ENCODE measurements at regions of chr11 and their contacts with region 1.

Region 1: DNA sequence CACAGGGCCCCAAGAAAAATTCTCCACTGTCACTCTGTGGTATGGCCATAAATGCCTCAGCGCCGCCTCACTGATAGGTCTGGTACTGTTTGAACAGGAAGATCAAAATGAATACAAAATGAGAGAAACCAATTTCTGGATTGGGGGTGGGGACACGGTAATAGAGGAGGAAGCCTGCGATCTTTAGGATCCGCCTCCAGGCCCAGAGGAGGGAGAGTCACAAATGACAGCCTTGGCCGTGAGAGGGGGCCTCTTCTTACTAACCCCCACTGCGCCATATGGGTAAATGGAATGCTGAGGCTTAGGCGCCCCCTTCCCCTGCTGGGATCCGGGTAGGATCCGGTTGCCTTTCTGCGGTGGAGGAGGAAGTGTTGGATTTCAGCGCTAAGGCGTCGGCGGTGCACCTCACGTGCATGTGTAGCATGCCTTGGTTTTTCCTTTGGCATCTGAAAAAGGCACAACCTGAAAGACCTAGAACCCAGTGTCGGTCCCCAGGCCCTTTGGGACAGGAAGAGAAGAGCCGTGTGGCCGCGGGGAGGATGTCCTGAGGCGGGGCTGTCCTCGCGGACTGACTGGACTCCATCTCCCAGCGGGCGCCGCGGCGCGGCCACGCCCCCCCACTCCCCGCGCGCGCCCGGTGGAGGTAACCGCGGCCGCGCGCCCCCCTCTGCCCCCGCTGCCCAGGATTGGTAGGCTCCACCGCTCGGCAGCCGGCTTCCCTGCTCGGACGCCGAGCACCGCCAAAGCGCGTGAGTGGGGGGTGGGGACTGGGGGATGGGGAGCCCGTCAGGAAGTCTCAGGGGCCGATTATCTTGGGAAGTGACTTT is 718 bp upstream of the MADD start:
- DNase-seq: peak; percentile 73
- H3K4me3 Mint-ChIP-seq: peak overlapping the region; percentile 81
- H3K27ac Mint-ChIP-seq: peak overlapping the region; percentile 92
- H3K4me1 Mint-ChIP-seq: peaks cover 54% of the 10 kb centered on the region
- H3K27me3 Mint-ChIP-seq: no peaks in the 10 kb centered on the region

Region 2: DNA sequence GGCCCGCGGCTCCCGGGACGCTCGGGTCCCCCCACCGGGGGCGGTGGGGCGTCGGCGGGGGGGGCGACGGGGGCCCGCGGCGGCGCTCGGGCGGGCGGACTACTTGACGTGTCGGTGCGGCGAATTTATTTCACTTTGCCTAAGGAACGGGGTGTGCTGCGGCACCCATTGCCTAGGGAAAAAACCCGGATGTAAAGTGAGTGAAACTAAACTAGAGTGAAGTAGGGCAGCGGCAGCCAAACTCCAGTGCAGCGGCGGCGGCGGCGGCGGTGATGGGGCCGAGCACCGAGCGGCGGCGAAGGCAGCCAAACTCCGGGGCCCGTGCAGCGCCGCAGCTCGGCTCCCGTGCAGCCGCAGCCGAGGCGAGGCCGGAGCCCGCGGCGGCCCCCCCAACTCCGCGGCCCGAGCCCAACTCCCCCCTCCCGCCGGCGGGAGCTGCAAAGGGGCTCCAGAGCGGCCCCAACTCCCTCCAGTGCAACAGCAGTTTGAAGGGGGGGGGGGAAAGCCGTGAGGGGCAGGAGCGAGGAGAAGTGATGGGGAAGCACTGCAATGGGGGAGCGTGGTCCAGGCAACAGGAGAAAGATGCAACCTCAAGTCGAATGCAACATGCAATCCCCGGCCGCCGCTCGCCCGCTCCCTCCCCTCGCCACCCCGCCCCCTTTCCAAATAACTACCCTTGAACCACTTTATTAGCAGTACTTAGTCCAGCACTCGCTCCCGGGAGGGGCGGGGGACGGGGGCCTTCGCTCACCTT is 1147.3 kb before region 1 on chr11:
- intact Hi-C with region 1: loop called (anchors 2 kb)
- DNase-seq: peak; percentile 76
- H3K4me3 Mint-ChIP-seq: peak overlapping the region; percentile 86
- H3K27ac Mint-ChIP-seq: peak overlapping the region; percentile 91
- H3K4me1 Mint-ChIP-seq: peaks cover 40% of the 10 kb centered on the region
- H3K27me3 Mint-ChIP-seq: no peaks in the 10 kb centered on the region

Region 3: DNA sequence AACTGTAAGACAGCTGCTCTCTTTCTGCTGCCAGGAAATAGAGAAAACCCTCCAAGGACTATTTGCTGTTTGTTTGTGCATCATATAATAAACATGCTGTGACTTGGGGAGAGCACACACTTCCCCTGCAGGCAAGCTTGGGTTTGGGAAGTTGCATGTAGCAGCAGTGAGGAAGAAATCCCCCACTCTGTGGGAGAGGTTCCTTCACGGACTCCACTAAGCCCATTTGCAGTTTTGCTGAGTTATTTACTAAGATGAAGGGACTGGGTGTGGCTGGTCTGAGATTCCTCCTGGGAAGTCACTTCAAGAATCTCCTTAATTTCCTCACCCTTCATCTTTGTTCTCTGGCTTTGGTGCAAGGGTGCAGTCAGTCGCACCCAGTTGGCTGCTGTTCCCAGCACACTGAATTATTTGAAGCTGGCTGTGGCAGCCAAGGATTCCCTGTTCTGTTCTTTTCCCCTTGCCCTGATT is 197.4 kb before region 1 on chr11:
- intact Hi-C with region 1: no loop called
- DNase-seq: no peak
- H3K4me3 Mint-ChIP-seq: no peak overlapping the region
- H3K27ac Mint-ChIP-seq: no peak overlapping the region
- H3K4me1 Mint-ChIP-seq: no peaks in the 10 kb centered on the region
- H3K27me3 Mint-ChIP-seq: peaks cover 2% of the 10 kb centered on the region

Region 4: GRCh38 chr11:47111318-47111804 is 157.9 kb before region 1 on chr11:
- intact Hi-C with region 1: no loop called
- DNase-seq: no peak
- H3K4me3 Mint-ChIP-seq: no peak overlapping the region
- H3K27ac Mint-ChIP-seq: no peak overlapping the region
- H3K4me1 Mint-ChIP-seq: no peaks in the 10 kb centered on the region
- H3K27me3 Mint-ChIP-seq: peaks cover 7% of the 10 kb centered on the region

Region 5: GRCh38 chr11:47176328-47177228 is 92.6 kb before region 1 on chr11 and contains the start of gene ARFGAP2:
- intact Hi-C with region 1: loop called (anchors 1 kb)
- DNase-seq: peak; percentile 96
- H3K4me3 Mint-ChIP-seq: peak within 1 kb of the TSS; percentile 97
- H3K27ac Mint-ChIP-seq: peak within 1 kb of the TSS; percentile 100
- H3K4me1 Mint-ChIP-seq: peaks cover 36% of the 10 kb centered on the region
- H3K27me3 Mint-ChIP-seq: no peaks in the 10 kb centered on the region
- total RNA-seq, gene ARFGAP2: 111 and 116 TPM in 2 replicates

Region 6: DNA sequence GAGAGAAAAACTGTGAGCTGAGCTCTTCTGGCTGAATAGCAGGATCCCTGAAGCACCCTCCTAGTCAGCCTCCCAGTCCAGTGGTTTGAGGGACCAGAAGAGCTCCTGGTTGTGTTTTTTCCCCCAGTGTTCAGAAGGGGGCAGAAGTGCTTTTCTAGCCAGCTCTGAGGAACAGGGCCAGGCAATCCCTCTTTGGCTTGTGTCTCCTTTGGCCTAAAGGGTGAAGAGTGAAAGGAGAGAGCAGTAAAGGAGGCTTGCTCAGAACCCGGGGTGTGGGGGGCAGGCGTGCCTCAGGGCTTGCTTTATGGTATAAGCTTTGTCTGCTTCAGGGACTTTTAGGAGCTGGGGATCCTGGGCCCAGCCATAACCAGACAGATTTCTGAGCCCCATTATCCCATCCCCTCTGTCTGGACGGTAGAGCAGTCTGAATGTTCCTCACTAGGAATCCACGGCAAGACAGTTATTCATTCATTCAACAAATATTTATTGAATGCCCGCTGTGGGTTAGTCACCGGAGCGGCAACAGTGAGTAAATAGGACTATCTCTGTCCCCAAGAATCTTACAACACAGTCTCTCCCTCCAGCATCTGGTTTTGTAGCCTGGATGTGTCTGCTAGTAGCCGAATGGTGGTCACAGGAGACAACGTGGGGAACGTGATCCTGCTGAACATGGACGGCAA is 35.1 kb before region 1 on chr11:
- intact Hi-C with region 1: loop called (anchors 2 kb)
- DNase-seq: no peak
- H3K4me3 Mint-ChIP-seq: peak overlapping the region; percentile 64
- H3K27ac Mint-ChIP-seq: peak overlapping the region; percentile 83
- H3K4me1 Mint-ChIP-seq: peaks cover 41% of the 10 kb centered on the region
- H3K27me3 Mint-ChIP-seq: no peaks in the 10 kb centered on the region

Region 7: GRCh38 chr11:47407746-47408590 is 138.8 kb after region 1 on chr11 and contains the start of gene SLC39A13:
- intact Hi-C with region 1: loop called (anchors 2 kb)
- DNase-seq: peak; percentile 93
- H3K4me3 Mint-ChIP-seq: peak within 1 kb of the TSS; percentile 94
- H3K27ac Mint-ChIP-seq: peak within 1 kb of the TSS; percentile 92
- H3K4me1 Mint-ChIP-seq: peaks cover 21% of the 10 kb centered on the region
- H3K27me3 Mint-ChIP-seq: no peaks in the 10 kb centered on the region
- total RNA-seq, gene SLC39A13: 15.5 and 16.2 TPM in 2 replicates